Activated T-helper 2 cell treated with anti-CD3 and anti-CD28 coated beads, Interferon-gamma antibody, Interleukin-2, Interleukin-4, amounts not matched to agents 10 μg/mL and 5 μg/mL and 100 μg/mL, durations not matched to agents 14 hours and 24 hours and 36 hours (primary cell): ENCODE measurements at regions of chr4 and their contacts with region 1.

Region 1: GRCh38 chr4:64539234-64539849 is 130.1 kb upstream of the TECRL start:
- DNase-seq: no peak
- H3K4me3 Mint-ChIP-seq: no peak overlapping the region
- H3K27ac Mint-ChIP-seq: no peak overlapping the region
- H3K4me1 Mint-ChIP-seq: no peaks in the 10 kb centered on the region
- H3K27me3 Mint-ChIP-seq: no peaks in the 10 kb centered on the region

Region 2: GRCh38 chr4:64158648-64159326 is 380.6 kb before region 1 on chr4:
- intact Hi-C with region 1: loop called (anchors 1 kb)
- DNase-seq: peak; percentile 10
- H3K4me3 Mint-ChIP-seq: no peak overlapping the region
- H3K27ac Mint-ChIP-seq: no peak overlapping the region
- H3K4me1 Mint-ChIP-seq: no peaks in the 10 kb centered on the region
- H3K27me3 Mint-ChIP-seq: no peaks in the 10 kb centered on the region

Region 3: GRCh38 chr4:64642936-64643335 is 103.6 kb after region 1 on chr4:
- intact Hi-C with region 1: no loop called
- DNase-seq: no peak
- H3K4me3 Mint-ChIP-seq: no peak overlapping the region
- H3K27ac Mint-ChIP-seq: no peak overlapping the region
- H3K4me1 Mint-ChIP-seq: no peaks in the 10 kb centered on the region
- H3K27me3 Mint-ChIP-seq: no peaks in the 10 kb centered on the region

Region 4: GRCh38 chr4:64747919-64748715 is 208.8 kb after region 1 on chr4:
- intact Hi-C with region 1: no loop called
- DNase-seq: no peak
- H3K4me3 Mint-ChIP-seq: no peak overlapping the region
- H3K27ac Mint-ChIP-seq: no peak overlapping the region
- H3K4me1 Mint-ChIP-seq: no peaks in the 10 kb centered on the region
- H3K27me3 Mint-ChIP-seq: no peaks in the 10 kb centered on the region